Gastrocnemius medialis (tissue), 4 donors: ENCODE measurements at regions of chr11 and their contacts with region 1.

Region 1: DNA sequence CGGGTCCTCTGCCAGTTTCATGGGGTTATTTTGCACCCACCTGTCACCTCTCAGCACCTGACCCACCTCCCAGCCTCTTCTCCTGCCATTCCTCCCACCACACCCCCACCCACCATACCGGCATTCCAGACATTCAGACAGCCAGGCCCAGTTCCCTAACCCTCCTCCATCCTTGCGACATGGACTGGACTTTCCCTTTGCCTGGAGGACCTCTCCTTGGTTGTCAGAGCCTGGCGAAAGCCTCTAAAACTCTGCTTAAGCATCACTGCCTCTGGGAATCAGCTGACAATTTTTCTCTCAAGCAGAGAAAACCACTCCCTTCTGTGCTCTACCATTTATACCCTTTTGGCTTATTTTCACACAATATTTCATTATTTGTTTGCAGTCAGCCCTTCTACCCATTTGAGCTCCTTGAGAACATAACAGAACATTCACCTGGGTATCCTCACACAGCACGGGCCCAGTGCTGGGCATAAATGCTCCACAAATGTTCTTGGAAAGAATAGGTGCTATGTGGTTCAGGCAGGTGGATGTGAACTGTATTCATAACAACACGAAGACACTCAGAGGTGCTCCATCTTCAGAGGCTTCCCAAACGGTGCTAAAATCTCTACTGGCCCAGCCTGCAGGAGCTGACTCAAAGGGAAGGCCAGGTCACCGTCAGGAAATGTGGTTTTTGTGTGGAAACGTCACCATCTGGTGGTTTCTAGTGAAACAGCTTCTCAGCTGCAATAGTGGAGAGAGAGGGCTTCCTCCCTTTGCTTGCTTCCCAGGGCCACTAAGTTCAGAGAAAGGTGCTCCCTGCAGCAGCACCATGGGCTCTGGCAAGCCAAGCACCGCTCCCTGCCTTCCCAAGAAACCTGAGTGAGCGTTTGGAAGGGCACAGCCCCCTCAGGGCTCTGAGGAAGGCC is 10.4 kb downstream of the SPATA19 start:
- DNase-seq: no peak
- ATAC-seq: peak in 1 of 2 donors; percentile 63
- H3K4me3 ChIP-seq: no peak overlapping the region
- H3K27ac ChIP-seq: no peak overlapping the region
- H3K4me1 ChIP-seq: no peaks in the 10 kb centered on the region
- H3K27me3 ChIP-seq: peaks cover 0 to 11% (median 0%) of the 10 kb centered on the region in 3 donors
- CTCF ChIP-seq: peak in 4 of 5 experiments; percentile 28 to 68 (median 50)
- POLR2A ChIP-seq: no peak

Region 2: DNA sequence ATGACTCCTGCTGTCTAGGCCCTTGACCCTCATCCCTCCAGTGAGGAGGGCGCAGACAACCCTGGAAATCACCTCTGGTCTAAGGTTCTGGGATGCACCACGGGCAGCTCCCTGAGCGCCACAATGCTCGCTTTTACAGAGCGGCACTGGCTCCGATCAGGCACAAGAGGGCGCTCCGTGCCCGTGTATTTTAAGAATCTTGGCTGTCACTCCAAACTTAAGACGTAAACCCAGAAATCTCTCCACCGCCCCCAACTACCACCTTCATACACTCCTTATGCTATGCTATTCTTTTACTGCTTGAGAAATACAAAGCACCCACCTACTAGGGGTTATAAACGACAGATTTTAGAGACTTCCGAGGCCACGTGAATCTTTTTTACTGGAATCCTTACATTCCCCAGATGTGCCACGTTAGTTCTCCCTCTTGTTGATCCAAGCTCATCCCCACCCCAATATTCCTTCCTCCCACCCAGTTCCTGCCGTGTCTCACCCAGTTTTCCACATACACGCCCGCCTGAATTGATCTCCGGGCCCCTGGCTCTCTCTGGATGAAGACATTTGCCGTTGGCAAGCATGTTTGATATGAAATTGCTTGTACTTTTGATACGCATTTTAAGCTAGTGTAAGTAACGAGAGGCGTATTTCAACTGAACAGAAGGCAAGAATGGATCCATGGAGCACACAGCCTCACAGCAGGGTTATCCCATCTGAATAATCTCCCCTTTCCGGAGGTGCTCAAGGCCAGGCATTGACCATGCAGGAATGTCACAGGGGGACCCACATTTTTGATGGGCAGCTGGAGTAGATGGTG is 756.1 kb before region 1 on chr11:
- in situ Hi-C with region 1: no loop called
- intact Hi-C with region 1: loop called (anchors 5 kb)
- DNase-seq: no peak
- ATAC-seq: no peak
- H3K4me3 ChIP-seq: no peak overlapping the region
- H3K27ac ChIP-seq: no peak overlapping the region
- H3K4me1 ChIP-seq: peaks cover 0 to 5% of the 10 kb centered on the region in 2 donors
- H3K27me3 ChIP-seq: peaks cover under 1 to 27% (median 16%) of the 10 kb centered on the region in 3 donors
- CTCF ChIP-seq: peak; percentile 20 to 66 (median 54)
- POLR2A ChIP-seq: no peak

Region 3: DNA sequence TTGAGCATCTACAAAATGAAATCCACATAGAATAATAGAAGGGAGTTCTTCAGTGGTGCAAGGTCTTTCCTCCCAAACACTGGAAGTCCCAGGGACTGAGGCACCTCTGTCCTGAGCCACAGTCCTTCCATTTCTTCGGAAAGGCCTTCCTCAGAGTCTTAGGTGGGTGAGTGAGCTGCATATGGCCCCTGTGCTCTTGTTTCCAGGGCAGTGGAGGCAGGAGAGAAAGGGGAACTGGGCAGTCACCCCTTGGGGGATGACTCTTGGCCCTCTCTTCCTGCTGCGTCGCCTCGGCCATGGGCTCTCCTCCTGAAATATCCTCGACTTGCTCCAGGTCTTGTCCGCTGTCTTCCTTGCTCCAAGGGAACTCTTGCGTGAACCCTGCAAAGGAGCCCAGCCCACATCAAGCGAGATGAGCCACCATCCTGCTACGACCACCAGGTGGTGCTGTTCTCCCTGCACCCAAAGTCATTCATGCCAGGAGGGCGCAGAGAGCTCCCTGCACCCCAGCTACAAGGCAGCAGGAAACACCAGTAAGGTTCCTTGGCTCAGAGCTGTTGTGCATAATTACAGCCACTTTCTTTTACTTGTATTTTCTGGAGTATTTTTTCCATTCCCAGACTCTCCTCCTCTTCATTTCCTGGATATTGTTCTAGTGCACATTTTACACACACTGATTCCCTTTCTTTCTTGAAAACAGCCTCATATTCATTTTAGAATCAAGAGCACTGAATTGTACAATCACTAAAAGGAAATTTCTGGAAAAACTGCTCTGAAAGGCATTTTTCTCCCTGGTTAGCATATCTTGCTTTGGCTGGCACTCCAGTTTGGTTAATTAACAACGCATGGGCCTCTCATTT is 700.4 kb before region 1 on chr11:
- in situ Hi-C with region 1: loop called in 2 of 4 experiments (anchors 10 to 25 kb)
- intact Hi-C with region 1: loop called (anchors 2 kb)
- DNase-seq: no peak
- ATAC-seq: no peak
- H3K4me3 ChIP-seq: no peak overlapping the region
- H3K27ac ChIP-seq: no peak overlapping the region
- H3K4me1 ChIP-seq: no peaks in the 10 kb centered on the region
- H3K27me3 ChIP-seq: peaks cover 0 to 2% (median 0%) of the 10 kb centered on the region in 3 donors
- CTCF ChIP-seq: peak; percentile 42 to 82 (median 69)
- POLR2A ChIP-seq: no peak